GM12878 (cell line): ENCODE measurements at regions of chr6 and their contacts with region 1.

Region 1: GRCh38 chr6:116531675-116532570 is 13.6 kb downstream of the TRAPPC3L start:
- DNase-seq: no peak
- ATAC-seq: peak; percentile 89
- H3K4me3 ChIP-seq: no peak overlapping the region
- H3K27ac ChIP-seq: no peak overlapping the region
- H3K4me1 ChIP-seq: no peaks in the 10 kb centered on the region
- H3K27me3 ChIP-seq: peaks cover 2 to 3% of the 10 kb centered on the region in 2 experiments; a peak in 2 of 4 replicates
- CTCF ChIP-seq: peak; percentile 69 to 71 (median 69)
- EP300 ChIP-seq: no peak
- POLR2A ChIP-seq: no peak
- RAD21 ChIP-seq: peak; percentile 81

Region 2: GRCh38 chr6:116217069-116217468 is 314.9 kb before region 1 on chr6:
- CTCF ChIA-PET with region 1: interaction called, 6 read pairs
- POLR2A ChIA-PET with region 1: no interaction called
- RAD21 ChIA-PET with region 1: interaction called, 4 read pairs
- SMC1A ChIA-PET with region 1: interaction called, 3 read pairs
- in situ Hi-C with region 1: no loop called
- intact Hi-C with region 1: loop called (anchors 5 kb)
- DNase-seq: no peak
- ATAC-seq: peak; percentile 69
- H3K4me3 ChIP-seq: no peak overlapping the region
- H3K27ac ChIP-seq: no peak overlapping the region
- H3K4me1 ChIP-seq: no peaks in the 10 kb centered on the region
- H3K27me3 ChIP-seq: no peaks in the 10 kb centered on the region
- CTCF ChIP-seq: peak in 2 of 3 experiments; percentile 30 to 41; a peak in 3 of 6 replicates
- EP300 ChIP-seq: no peak
- POLR2A ChIP-seq: no peak
- RAD21 ChIP-seq: peak; percentile 31; the same call in 1 of the 2 replicates

Region 3: DNA sequence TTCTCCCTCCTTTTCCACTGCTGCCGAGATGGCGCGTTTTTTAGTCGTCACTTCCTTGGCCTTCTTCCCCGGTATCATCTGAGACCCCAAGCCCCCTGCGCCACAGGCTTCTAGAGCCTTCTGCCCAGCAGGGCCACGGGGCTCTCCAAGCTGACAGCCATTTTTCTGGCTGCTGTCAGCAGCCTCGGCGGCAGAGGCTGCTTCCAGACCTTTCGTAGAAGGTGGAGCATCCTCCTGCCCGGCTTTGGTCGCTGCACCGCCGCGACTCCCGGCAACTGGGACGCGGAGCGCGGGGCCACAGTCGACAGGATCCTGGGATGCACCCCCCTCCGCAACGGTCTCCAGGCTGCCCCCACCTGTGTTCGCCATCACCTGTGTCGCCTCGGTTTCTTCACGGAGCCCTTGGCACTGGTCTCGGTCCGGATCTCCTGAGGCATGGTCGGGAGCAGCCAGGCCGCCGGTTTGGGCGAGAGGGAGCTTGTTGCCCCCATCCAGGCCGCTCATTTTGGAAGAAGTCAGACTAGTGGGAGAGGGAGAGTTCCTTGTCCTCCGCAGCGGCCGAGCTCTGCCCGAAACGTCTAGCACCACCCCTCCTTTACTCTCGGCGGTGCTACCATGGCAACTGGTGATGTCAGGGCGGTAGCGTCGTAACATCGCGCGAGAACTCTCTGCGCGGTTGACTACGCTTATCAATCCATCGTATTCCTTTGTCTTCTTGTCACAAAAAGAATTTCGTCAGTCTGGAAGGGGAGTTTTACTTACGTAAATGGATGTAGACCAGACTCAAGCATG is 278.2 kb before region 1 on chr6 and contains the start of gene TSPYL4:
- CTCF ChIA-PET with region 1: no interaction called
- POLR2A ChIA-PET with region 1: no interaction called
- RAD21 ChIA-PET with region 1: no interaction called
- SMC1A ChIA-PET with region 1: no interaction called
- in situ Hi-C with region 1: no loop called
- intact Hi-C with region 1: no loop called
- DNase-seq: peak; percentile 87
- ATAC-seq: peak; percentile 96
- H3K4me3 ChIP-seq: peak within 1 kb of the TSS; percentile 94
- H3K27ac ChIP-seq: peak within 1 kb of the TSS; percentile 90
- H3K4me1 ChIP-seq: peaks cover 13% of the 10 kb centered on the region
- H3K27me3 ChIP-seq: no peaks in the 10 kb centered on the region
- CTCF ChIP-seq: no peak
- EP300 ChIP-seq: no peak
- POLR2A ChIP-seq: peak; percentile 84
- RAD21 ChIP-seq: no peak
- polyA plus RNA-seq, gene TSPYL4: 1.5 to 2.2 TPM

Region 4: DNA sequence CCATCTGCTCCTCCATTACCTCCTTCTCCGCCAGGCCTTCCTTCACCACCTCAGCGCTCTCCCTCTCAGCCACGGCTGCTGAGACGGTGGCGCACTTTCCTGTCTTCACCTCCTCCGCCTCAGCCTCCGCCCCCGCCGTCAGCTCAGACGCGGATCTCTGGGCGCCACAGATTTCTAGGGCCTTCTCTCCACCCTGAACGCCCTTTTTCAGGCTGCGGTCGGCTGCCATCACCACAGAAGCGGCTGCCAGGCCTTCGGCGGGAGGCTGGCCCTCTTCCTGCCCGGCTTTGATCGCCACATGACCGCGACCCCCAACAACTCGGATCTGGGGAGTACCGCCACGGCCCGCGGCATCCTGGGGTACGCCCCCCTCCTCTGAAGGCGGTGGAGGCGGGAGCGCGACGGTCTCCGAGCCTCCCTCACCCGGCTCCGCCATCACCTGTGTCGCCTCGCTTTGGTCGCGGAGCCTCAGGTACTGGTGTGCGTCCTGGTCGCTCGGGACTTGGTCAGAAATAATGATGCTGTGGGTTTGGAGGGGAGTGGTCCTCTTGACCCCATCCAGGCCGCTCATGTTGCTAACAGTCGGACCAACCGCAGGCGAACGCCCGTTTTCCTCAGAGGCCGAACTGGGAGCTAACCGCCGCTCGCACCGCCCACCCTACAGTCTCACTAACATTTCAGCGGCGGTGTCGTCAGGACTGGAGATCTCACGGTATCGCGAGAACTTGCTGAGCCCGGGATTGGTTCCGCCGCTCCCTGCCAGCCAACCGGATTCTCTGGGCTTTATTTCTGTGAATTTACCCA is 252.5 kb before region 1 on chr6 and contains the start of gene TSPYL1:
- CTCF ChIA-PET with region 1: interaction called, 20 read pairs
- POLR2A ChIA-PET with region 1: no interaction called
- RAD21 ChIA-PET with region 1: interaction called, 3 read pairs
- SMC1A ChIA-PET with region 1: interaction called, 6 read pairs
- in situ Hi-C with region 1: loop called (anchors 5 kb)
- intact Hi-C with region 1: no loop called
- DNase-seq: peak; percentile 90
- ATAC-seq: peak; percentile 94
- H3K4me3 ChIP-seq: peak within 1 kb of the TSS; percentile 86
- H3K27ac ChIP-seq: peak within 1 kb of the TSS; percentile 96
- H3K4me1 ChIP-seq: no peaks in the 10 kb centered on the region
- H3K27me3 ChIP-seq: no peaks in the 10 kb centered on the region
- CTCF ChIP-seq: peak in 2 of 3 experiments; percentile 16 to 18; a peak in 1 of 6 replicates
- EP300 ChIP-seq: 0 out of 4 replicates have a peak, but pooled peaks of 1 of the 2 experiments have one; percentile 33
- POLR2A ChIP-seq: peak; percentile 94
- RAD21 ChIP-seq: no peak
- polyA plus RNA-seq, gene TSPYL1: 22.9 to 29.9 TPM

Region 5: GRCh38 chr6:116511404-116512110 is 20.4 kb before region 1 on chr6 and contains the start of gene CALHM5:
- CTCF ChIA-PET with region 1: interaction called, 34 read pairs
- POLR2A ChIA-PET with region 1: no interaction called
- RAD21 ChIA-PET with region 1: no interaction called
- SMC1A ChIA-PET with region 1: interaction called, 4 read pairs
- in situ Hi-C with region 1: no loop called
- intact Hi-C with region 1: no loop called
- DNase-seq: no peak
- ATAC-seq: no peak
- H3K4me3 ChIP-seq: no peak within 1 kb of the TSS
- H3K27ac ChIP-seq: no peak within 1 kb of the TSS
- H3K4me1 ChIP-seq: peaks cover 9% of the 10 kb centered on the region
- H3K27me3 ChIP-seq: no peaks in the 10 kb centered on the region; a peak in 1 of 4 replicates
- CTCF ChIP-seq: peak in 1 of 3 experiments; percentile 24; a peak in 1 of 6 replicates
- EP300 ChIP-seq: no peak
- POLR2A ChIP-seq: no peak
- RAD21 ChIP-seq: 0 out of 2 replicates have a peak, but pooled peaks have one; percentile 2
- polyA plus RNA-seq, gene CALHM5: not detected

Region 6: GRCh38 chr6:116561377-116562018 is 29.6 kb after region 1 on chr6:
- CTCF ChIA-PET with region 1: interaction called, 48 read pairs
- POLR2A ChIA-PET with region 1: no interaction called
- RAD21 ChIA-PET with region 1: interaction called, 9 read pairs
- SMC1A ChIA-PET with region 1: interaction called, 6 read pairs
- in situ Hi-C with region 1: no loop called
- intact Hi-C with region 1: loop called (anchors 1 kb)
- DNase-seq: no peak
- ATAC-seq: peak; percentile 87
- H3K4me3 ChIP-seq: no peak overlapping the region
- H3K27ac ChIP-seq: no peak overlapping the region
- H3K4me1 ChIP-seq: no peaks in the 10 kb centered on the region
- H3K27me3 ChIP-seq: no peaks in the 10 kb centered on the region; a peak in 1 of 4 replicates
- CTCF ChIP-seq: peak; percentile 84 to 93 (median 88)
- EP300 ChIP-seq: no peak
- POLR2A ChIP-seq: no peak
- RAD21 ChIP-seq: peak; percentile 81

Region 7: DNA sequence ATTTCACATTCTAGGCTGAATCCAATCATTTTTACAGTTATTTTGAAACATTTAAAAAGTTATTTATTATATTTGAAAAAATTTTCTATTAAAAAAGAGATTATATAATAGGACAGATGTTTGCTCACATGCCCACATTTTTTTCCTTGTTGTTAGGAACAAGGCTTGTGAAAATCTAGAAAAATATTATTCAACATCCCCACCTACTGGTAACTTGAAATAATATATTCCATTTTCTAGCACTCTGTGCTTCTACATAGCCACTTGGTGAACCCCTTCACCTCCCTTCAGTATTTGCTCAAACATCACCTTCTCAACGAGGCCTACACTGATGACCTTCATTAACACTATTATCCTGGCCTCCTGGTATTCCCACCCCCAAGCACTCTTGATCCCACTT is 315.3 kb after region 1 on chr6:
- CTCF ChIA-PET with region 1: interaction called, 3 read pairs
- POLR2A ChIA-PET with region 1: no interaction called
- RAD21 ChIA-PET with region 1: no interaction called
- SMC1A ChIA-PET with region 1: interaction called, 3 read pairs
- in situ Hi-C with region 1: no loop called
- intact Hi-C with region 1: loop called (anchors 5 kb)
- DNase-seq: no peak
- ATAC-seq: peak; percentile 75
- H3K4me3 ChIP-seq: no peak overlapping the region
- H3K27ac ChIP-seq: no peak overlapping the region
- H3K4me1 ChIP-seq: no peaks in the 10 kb centered on the region
- H3K27me3 ChIP-seq: no peaks in the 10 kb centered on the region
- CTCF ChIP-seq: peak in 2 of 3 experiments; percentile 10 to 42; a peak in 3 of 6 replicates
- EP300 ChIP-seq: no peak
- POLR2A ChIP-seq: no peak
- RAD21 ChIP-seq: peak; percentile 42

Region 8: DNA sequence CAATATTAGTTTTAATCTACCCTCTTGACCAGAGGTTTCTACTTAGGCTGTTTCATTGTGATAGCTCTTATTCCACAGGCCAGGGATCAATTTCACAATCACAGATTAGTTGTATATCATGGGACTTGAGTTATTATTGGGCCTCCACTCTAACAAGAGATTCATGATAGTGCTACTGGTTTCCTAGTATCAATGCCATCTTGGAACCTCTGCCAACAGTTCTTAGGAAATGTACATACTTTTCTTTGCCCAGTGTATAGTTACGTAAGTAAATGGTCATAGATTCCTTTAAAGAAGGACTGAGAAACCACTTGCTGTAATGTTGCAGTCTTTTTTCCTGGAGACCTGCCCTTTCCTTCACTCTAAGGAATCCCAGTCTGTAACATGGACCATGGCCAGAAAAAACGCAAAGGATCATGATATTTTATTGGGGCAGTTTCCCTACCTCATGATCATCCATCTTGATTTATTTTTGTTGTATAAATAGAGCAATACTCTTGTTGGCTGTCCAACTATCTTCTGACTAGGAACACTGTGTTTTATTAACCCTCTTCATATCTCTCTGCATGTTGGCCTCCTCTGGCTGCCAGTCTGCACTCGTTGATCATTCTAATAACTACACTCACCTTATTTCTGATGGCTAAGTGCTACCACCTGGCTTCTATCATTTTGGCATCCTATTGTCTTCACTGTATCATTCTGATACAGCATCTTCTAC is 695.5 kb after region 1 on chr6:
- CTCF ChIA-PET with region 1: no interaction called
- POLR2A ChIA-PET with region 1: no interaction called
- RAD21 ChIA-PET with region 1: no interaction called
- SMC1A ChIA-PET with region 1: no interaction called
- in situ Hi-C with region 1: no loop called
- intact Hi-C with region 1: no loop called
- DNase-seq: no peak
- ATAC-seq: no peak
- H3K4me3 ChIP-seq: no peak overlapping the region
- H3K27ac ChIP-seq: no peak overlapping the region
- H3K4me1 ChIP-seq: no peaks in the 10 kb centered on the region
- H3K27me3 ChIP-seq: no peaks in the 10 kb centered on the region
- CTCF ChIP-seq: no peak
- EP300 ChIP-seq: no peak
- POLR2A ChIP-seq: no peak
- RAD21 ChIP-seq: no peak